SK-N-SH (cell line): ENCODE measurements at regions of chr16 and their contacts with region 1.

Region 1: DNA sequence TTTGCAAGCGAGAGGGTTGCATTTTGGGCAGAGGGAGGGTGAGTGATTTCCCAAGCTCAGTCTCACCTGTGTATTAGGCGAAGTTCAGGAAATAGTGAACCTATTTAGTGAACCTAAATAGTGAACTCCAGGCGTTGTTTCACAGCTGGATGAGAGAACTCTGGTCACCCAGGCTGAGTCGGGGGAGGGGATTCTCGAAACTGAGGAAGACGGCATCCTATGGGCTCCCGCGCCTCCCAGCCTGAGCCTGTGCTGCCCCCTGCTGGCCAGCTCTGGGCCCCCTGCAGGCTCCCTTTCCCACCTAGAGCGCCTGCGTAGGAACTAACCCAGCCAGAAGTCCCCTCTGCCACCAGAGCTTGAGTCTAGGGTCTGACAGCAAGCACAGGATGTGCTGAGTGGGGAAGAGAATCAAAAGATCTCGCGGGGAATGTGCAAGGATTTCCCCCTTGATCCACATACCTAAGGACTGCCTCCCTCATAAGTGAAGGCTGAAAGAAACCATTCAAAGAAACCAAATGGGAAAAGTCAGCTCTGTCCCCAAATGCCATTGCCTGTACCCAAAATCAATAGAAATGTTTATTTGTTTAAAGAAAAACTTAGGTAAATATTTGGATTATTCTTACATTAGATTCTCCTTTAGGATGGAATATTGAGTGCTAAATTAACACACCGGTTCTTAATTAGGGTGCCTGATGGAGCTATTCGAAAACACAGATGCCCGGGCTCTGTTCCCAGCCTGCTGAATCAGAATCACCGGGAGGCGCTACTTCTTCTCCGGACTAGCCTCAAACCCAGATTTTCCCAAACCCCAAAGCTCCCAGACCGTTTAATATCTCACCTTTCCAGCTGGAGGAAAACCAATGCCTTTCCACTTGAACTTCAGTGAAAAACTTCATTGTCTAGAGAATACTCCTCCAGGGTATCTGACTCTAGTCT is 14.8 kb upstream of the MARVELD3 start:
- DNase-seq: peak; percentile 91
- H3K4me3 ChIP-seq: peak overlapping the region in 1 of 2 experiments; percentile 50; a peak in 3 of 4 replicates
- H3K27ac ChIP-seq: no peak overlapping the region
- H3K4me1 ChIP-seq: peaks cover 0 to 2% of the 10 kb centered on the region in 2 experiments; a peak in 2 of 4 replicates
- H3K27me3 ChIP-seq: peaks cover 9% of the 10 kb centered on the region; the same call in 1 of the 2 replicates
- CTCF ChIP-seq: peak; percentile 79
- EP300 ChIP-seq: no peak
- RAD21 ChIP-seq: peak; percentile 82

Region 2: GRCh38 chr16:71515026-71515425 is 96.2 kb before region 1 on chr16:
- CTCF ChIA-PET with region 1: no interaction called
- POLR2A ChIA-PET with region 1: no interaction called
- DNase-seq: no peak
- H3K4me3 ChIP-seq: no peak overlapping the region
- H3K27ac ChIP-seq: no peak overlapping the region
- H3K4me1 ChIP-seq: no peaks in the 10 kb centered on the region
- H3K27me3 ChIP-seq: no peaks in the 10 kb centered on the region; the same call in 1 of the 2 replicates
- CTCF ChIP-seq: no peak
- EP300 ChIP-seq: no peak
- RAD21 ChIP-seq: no peak

Region 3: DNA sequence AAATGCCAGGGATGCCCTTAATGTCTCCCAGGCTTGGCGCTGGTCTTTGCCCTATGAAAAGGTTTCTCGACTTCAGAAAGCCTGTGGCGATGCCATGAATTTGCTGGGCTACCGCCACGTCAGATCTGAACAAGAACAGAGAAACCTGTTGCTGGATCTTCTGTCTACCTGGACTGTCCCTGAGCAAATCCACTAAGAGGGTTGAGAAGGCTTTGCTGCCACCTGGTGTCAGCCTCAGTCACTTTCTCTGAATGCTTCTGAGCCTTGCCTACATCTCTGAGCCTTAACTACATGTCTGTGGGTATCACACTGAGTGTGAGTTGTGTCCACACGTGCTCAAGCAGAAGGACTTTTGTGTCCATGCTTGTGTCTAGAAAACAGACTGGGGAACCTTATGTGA is 73.6 kb before region 1 on chr16:
- CTCF ChIA-PET with region 1: interaction called, 14 read pairs
- POLR2A ChIA-PET with region 1: no interaction called
- DNase-seq: peak; percentile 36
- H3K4me3 ChIP-seq: no peak overlapping the region; a peak in 1 of 4 replicates
- H3K27ac ChIP-seq: no peak overlapping the region
- H3K4me1 ChIP-seq: no peaks in the 10 kb centered on the region
- H3K27me3 ChIP-seq: no peaks in the 10 kb centered on the region
- CTCF ChIP-seq: peak; percentile 59
- EP300 ChIP-seq: no peak
- RAD21 ChIP-seq: peak; percentile 58

Region 4: GRCh38 chr16:71572497-71573116 is 38.6 kb before region 1 on chr16:
- CTCF ChIA-PET with region 1: interaction called, 12 read pairs
- POLR2A ChIA-PET with region 1: no interaction called
- DNase-seq: no peak
- H3K4me3 ChIP-seq: no peak overlapping the region
- H3K27ac ChIP-seq: no peak overlapping the region
- H3K4me1 ChIP-seq: no peaks in the 10 kb centered on the region
- H3K27me3 ChIP-seq: peaks cover 32% of the 10 kb centered on the region; the same call in 1 of the 2 replicates
- CTCF ChIP-seq: no peak
- EP300 ChIP-seq: no peak
- RAD21 ChIP-seq: no peak

Region 5: DNA sequence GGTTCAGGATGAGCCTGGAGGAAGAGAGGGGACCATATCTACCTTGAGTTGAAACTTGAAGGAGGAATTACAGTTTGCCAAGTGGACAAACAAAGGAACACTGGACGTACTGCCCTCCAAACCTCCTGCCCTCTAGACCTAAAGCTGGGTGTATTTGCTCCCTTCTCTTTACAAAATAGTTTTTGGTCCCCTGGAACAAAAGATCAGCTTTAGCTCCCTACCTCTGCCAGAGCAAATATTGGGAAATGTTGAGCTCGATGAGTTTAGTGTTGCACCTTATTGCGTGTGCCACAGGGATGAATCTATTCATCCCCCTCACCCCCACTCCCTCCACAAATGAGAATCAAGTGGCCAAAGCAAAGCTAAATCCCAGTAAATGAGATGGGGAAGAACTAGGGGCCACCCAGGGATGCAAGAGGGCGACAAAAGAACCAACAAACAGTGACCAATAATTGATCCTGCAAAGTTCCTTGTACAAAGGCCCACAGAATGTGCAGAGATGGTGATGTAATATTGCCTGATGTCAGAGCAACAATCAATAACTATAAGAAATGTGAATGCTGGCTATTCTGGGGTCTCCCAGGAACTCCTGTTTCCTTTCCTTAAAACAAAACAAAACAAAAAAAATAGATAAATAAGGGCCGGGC is 17.1 kb before region 1 on chr16:
- CTCF ChIA-PET with region 1: interaction called, 15 read pairs
- POLR2A ChIA-PET with region 1: no interaction called
- DNase-seq: no peak
- H3K4me3 ChIP-seq: no peak overlapping the region
- H3K27ac ChIP-seq: no peak overlapping the region
- H3K4me1 ChIP-seq: no peaks in the 10 kb centered on the region
- H3K27me3 ChIP-seq: peaks cover 3% of the 10 kb centered on the region; the same call in 1 of the 2 replicates
- CTCF ChIP-seq: no peak
- EP300 ChIP-seq: no peak
- RAD21 ChIP-seq: no peak

Region 6: DNA sequence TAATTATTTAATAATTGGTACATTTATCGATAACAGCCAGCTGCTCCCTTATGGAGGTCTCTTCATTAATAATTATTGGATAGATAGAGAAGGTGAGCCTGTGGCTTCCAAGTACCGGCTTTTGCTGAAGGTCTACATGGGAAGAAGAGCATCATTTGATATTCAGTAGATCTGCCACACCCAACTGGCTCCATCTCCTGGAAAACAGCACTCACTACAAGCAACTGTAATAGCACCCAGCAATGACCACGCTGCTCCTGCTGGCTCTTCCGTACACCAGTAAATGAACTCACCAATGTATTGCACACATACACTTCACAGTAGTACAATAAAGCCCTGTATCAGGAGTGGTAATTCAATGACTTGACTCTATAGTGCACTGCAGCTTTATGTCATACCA is 34.2 kb after region 1 on chr16:
- CTCF ChIA-PET with region 1: interaction called, 15 read pairs
- POLR2A ChIA-PET with region 1: no interaction called
- DNase-seq: peak; percentile 44
- H3K4me3 ChIP-seq: no peak overlapping the region
- H3K27ac ChIP-seq: no peak overlapping the region
- H3K4me1 ChIP-seq: no peaks in the 10 kb centered on the region
- H3K27me3 ChIP-seq: no peaks in the 10 kb centered on the region
- CTCF ChIP-seq: peak; percentile 49
- EP300 ChIP-seq: no peak
- RAD21 ChIP-seq: peak; percentile 43